GM23248 (cell line): ENCODE measurements at regions of chr4 and their contacts with region 1.

Region 1: GRCh38 chr4:110516106-110516922 is 40.4 kb downstream of the ENPEP start:
- DNase-seq: peak; percentile 63
- H3K4me3 ChIP-seq: no peak overlapping the region
- H3K27ac ChIP-seq: no peak overlapping the region
- H3K4me1 ChIP-seq: no peaks in the 10 kb centered on the region
- H3K27me3 ChIP-seq: no peaks in the 10 kb centered on the region

Region 2: GRCh38 chr4:109998867-109999584 is 517.3 kb before region 1 on chr4:
- in situ Hi-C with region 1: loop called (anchors 5 kb)
- DNase-seq: peak; percentile 68
- H3K4me3 ChIP-seq: no peak overlapping the region
- H3K27ac ChIP-seq: no peak overlapping the region
- H3K4me1 ChIP-seq: no peaks in the 10 kb centered on the region
- H3K27me3 ChIP-seq: peaks cover under 1% of the 10 kb centered on the region; the same call in 1 of the 2 replicates

Region 3: GRCh38 chr4:110211007-110211769 is 305.1 kb before region 1 on chr4:
- in situ Hi-C with region 1: loop called (anchors 25 kb)
- DNase-seq: peak; percentile 72
- H3K4me3 ChIP-seq: no peak overlapping the region
- H3K27ac ChIP-seq: no peak overlapping the region
- H3K4me1 ChIP-seq: no peaks in the 10 kb centered on the region
- H3K27me3 ChIP-seq: no peaks in the 10 kb centered on the region

Region 4: DNA sequence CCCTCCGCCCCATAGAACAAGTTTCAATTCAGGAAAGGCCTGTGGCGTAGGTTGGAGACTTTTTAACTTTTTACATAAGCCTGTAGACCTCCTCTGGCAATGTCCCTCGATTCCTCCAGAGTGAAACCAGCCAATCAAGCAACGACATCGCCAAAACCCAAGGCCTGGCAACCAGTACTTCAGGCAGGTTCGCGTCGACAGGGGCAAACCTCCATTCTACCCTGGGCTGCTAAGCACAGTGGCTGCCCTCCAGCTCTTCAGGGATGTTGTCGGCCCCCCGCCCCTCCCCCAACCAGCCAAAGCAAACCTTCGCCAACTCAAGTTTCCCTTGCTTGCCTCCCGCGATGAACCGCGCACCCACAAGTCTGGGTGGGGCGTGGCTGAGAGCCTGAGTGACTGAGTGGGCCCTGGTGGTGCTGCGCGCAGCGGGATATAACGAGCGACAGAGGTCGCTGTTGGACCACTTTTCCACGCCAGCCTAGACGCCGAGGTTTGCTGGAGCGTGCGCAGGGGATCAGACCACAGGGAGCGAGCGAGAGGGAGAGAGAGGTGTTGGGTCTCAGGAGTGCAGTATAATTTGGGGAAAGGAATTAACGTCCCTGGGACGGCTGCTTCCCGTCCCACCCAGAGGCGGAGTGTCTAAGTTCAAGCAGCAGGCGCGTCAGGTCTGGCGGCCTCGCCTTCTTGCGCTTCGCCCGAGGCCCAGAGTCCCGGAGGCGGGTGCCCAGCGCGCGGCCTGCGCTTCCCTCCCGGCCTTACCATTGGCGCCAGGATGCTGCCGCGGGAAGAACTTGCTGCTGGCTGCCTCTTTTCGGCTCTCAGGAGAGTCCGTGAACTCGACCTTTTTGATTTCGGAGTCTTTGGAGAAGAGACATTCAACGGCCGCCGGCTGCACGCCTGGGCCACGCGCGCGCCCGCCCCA is 115.5 kb after region 1 on chr4:
- in situ Hi-C with region 1: no loop called
- DNase-seq: peak; percentile 28
- H3K4me3 ChIP-seq: no peak overlapping the region
- H3K27ac ChIP-seq: no peak overlapping the region
- H3K4me1 ChIP-seq: peaks cover 4% of the 10 kb centered on the region; the same call in 1 of the 2 replicates
- H3K27me3 ChIP-seq: no peaks in the 10 kb centered on the region